ENCODE measurements at regions of chr6 and their contacts with region 1.

Region 1: DNA sequence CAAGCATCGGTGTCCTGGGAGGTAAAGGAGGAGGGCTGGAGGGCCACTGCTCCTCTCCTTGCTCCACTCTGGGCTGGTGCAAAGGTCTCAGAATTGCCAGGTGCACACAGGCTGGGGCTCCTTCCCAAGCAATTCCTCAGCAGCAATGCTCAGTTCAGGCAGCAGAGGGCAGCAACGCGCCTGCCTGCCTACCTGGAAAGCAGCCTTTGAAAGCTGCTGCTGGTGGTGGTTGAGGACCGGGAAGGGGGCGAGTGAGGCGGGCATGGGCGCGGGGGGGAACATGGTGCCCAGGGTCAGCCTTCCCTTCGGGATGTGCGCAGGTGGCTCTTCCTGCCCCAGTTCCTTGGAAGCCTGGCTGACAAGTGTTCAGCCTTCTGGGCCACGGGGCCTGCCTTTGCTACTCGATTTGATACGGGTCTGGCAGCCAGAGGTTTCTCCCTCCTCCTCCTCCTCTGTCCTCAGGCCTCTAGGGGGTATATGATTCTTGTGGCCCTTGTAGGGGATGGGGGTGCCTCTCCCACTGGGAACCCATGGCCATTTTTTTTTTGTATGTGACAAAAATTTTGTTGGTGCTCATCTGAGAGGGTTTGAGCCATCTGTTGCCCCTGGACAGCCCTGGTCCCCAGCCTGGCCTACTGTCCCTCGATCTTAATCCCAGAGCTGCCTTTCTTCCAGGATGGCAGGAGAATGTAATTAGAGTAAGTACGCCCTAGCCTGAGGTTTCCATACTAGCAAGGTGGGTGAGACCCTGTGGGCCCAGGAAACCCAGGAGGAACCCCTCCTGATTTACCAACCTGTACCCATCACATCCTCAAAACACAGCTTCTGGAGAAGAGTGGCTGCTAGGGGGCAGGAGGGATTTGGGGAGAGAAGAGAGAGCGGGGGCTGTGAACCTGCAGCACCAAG is 20.1 kb downstream of the MRPS18A start:
- DNase-seq: peak; percentile 95
- H3K4me3 ChIP-seq: no peak overlapping the region
- H3K27ac ChIP-seq: peak overlapping the region; percentile 27
- H3K4me1 ChIP-seq: peaks cover 17% of the 10 kb centered on the region
- H3K27me3 ChIP-seq: no peaks in the 10 kb centered on the region
- CTCF ChIP-seq: peak; percentile 96

Region 2: DNA sequence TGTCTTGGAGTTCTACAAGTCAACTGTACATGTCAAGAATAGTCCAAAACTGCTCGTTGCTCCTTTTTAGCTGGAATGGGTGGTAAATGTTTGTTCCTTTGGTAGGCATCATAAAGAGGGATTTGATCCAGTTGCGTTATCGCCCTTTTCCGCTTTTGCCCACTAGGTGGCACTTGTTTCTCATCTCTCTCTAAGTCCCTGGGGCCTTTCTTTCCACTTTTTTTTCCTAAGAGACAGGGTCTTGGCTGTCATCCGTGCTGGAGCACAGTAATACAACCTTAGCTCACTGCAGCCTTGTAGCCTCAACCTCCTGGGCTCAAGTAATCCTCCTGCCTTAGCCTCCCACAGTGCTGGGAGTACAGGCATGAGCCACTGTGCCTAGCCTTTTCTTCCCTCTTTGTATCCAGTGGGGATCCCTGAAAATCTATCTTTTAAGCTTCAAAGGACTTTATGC is 59.2 kb before region 1 on chr6:
- intact Hi-C with region 1: loop called (anchors 10 kb)
- DNase-seq: peak; percentile 73
- H3K4me3 ChIP-seq: no peak overlapping the region
- H3K27ac ChIP-seq: no peak overlapping the region
- H3K4me1 ChIP-seq: no peaks in the 10 kb centered on the region
- H3K27me3 ChIP-seq: no peaks in the 10 kb centered on the region
- CTCF ChIP-seq: peak; percentile 82

Region 3: GRCh38 chr6:43723737-43724295 is 56.3 kb after region 1 on chr6:
- intact Hi-C with region 1: loop called (anchors 5 kb)
- DNase-seq: peak; percentile 92
- H3K4me3 ChIP-seq: no peak overlapping the region
- H3K27ac ChIP-seq: no peak overlapping the region
- H3K4me1 ChIP-seq: peaks cover 9% of the 10 kb centered on the region
- H3K27me3 ChIP-seq: no peaks in the 10 kb centered on the region
- CTCF ChIP-seq: peak; percentile 68

Region 4: GRCh38 chr6:43762966-43763695 is 95.6 kb after region 1 on chr6:
- intact Hi-C with region 1: loop called (anchors 5 kb)
- DNase-seq: no peak
- H3K4me3 ChIP-seq: no peak overlapping the region
- H3K27ac ChIP-seq: no peak overlapping the region
- H3K4me1 ChIP-seq: peaks cover 3% of the 10 kb centered on the region
- H3K27me3 ChIP-seq: no peaks in the 10 kb centered on the region
- CTCF ChIP-seq: no peak

Region 5: GRCh38 chr6:43937236-43938164 is 270.0 kb after region 1 on chr6:
- intact Hi-C with region 1: loop called (anchors 10 kb)
- DNase-seq: no peak
- H3K4me3 ChIP-seq: no peak overlapping the region
- H3K27ac ChIP-seq: no peak overlapping the region
- H3K4me1 ChIP-seq: no peaks in the 10 kb centered on the region
- H3K27me3 ChIP-seq: no peaks in the 10 kb centered on the region
- CTCF ChIP-seq: no peak

Region 6: DNA sequence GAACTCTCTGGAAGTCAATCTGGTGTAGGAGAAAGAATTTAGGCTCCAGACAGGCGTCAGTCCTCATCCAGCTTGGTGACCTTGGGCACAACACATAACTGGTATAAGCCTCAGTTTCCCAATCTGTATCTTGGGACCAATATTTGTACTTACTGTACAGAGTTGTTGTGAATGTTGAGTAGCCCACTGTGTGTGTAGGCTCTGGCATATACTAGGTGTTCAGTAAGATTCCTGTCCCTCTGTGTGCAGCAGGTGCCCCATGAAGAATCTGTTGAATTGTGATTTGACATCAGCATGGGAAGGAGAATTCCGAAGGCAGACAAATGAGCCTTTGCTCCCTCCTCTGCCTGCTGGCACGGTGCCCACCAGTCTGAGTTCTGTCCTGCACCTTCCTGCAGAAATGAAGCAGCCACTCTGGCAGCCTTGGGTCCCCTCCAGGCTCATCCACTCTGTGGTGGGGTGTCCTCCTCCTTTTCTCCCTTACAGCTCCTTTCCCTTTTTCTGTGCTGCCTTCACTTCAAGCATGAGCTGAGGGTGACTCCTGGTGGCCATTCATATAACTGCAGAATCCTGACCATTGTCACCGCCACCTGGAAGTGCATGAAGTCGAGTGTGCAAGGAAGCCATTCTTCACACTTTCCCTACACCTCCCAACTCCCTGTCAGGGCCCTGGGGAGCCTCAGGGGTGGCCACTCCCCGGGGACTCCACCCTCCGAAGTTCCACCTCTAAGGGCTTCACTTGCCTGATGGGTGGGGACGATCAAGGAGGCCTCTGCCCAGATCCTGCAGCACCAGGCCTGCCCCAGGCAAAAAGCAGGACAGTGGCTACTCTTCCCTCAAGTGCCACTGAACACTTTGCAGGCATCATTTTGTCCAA is 411.5 kb after region 1 on chr6:
- intact Hi-C with region 1: loop called (anchors 2 kb)
- DNase-seq: peak; percentile 89
- H3K4me3 ChIP-seq: no peak overlapping the region
- H3K27ac ChIP-seq: no peak overlapping the region
- H3K4me1 ChIP-seq: peaks cover 15% of the 10 kb centered on the region
- H3K27me3 ChIP-seq: no peaks in the 10 kb centered on the region
- CTCF ChIP-seq: peak; percentile 87

Measured in colonic mucosa (tissue), 4 donors.